Activated T-helper 2 cell treated with anti-CD3 and anti-CD28 coated beads, Interferon-gamma antibody, Interleukin-2, Interleukin-4, amounts not matched to agents 10 μg/mL and 5 μg/mL and 100 μg/mL, durations not matched to agents 14 hours and 24 hours and 36 hours (primary cell): ENCODE measurements at regions of chr11 and their contacts with region 1.

Region 1: GRCh38 chr11:32435511-32435941 is at the start of gene WT1:
- DNase-seq: no peak
- H3K4me3 Mint-ChIP-seq: no peak within 1 kb of the TSS
- H3K27ac Mint-ChIP-seq: no peak within 1 kb of the TSS
- H3K4me1 Mint-ChIP-seq: peaks cover 14% of the 10 kb centered on the region
- H3K27me3 Mint-ChIP-seq: peaks cover 81% of the 10 kb centered on the region
- total RNA-seq, gene WT1: not detected in 2 replicates

Region 2: DNA sequence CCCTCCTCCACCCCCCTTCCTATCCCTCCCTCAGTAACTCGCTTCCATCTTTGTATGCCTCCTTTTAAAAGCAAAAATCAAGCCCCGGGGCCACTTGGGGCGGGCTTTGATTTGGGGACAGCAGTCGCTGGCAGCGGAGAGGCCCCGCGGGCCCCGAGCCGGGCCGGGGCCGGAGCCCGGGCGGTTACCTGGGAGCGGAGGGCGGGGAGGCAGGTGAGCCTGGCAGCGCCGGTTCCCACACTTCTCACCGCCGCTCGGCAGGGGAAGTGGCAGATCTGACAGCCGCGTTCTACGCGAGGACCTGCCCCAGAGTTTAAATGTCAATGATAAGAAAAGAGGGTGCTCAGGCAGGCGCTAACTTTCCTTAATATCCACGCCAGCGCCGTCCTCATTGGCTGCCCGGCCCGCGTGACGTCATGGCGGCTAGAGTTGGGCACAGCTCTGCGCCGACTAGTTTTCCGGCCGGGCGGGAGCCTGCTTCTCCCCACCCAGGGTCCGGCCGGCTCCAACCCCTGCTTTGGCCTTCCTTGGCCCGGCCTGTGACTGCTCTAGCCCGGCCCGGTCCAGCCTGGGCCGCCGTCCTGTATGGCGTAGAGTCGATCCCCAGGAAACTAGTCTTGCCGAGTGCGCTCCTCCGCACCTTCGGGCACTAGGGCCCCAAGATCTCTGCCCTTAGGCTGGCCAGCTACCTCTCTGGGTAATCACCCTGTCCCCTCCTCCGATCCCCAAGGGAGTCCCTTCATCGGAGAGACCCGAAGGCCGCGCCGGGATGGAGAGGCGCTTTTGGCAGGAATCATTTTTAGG is 617.7 kb before region 1 on chr11:
- intact Hi-C with region 1: loop called (anchors 2 kb)
- DNase-seq: no peak
- H3K4me3 Mint-ChIP-seq: no peak overlapping the region
- H3K27ac Mint-ChIP-seq: no peak overlapping the region
- H3K4me1 Mint-ChIP-seq: no peaks in the 10 kb centered on the region
- H3K27me3 Mint-ChIP-seq: peaks cover 73% of the 10 kb centered on the region

Region 3: DNA sequence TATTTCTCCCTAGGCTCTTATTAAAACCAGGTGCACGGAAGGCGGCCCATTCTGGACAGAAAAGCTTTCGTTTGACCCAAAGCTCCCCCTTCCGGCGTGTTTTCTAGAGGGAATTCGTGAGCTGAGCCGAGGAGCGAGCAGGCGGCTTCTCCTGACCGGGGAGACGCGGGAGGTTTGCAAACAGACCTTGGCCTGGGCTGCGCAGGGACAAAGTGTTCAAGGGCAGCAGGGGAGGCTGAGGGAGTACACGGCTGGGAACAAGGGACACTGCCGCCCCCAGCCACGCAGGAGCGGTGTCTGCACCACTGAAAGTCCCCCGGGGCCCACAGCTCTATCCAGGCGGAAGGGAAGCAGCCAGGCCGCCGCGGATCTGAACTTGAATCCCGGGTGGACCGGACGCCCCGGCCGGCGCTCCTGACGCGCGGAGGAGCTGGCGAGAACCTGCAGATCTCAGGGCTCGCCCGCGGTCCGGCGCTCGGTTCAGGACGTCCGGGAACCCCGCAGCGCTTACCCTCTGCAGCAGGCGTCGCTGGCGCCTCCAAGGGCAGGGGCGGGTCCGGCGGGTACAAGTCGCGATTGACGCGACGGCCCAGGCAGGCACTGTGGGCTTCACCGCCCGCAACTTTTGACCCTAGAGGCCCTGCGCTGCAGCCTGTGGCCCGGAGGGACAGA is 102.1 kb before region 1 on chr11:
- intact Hi-C with region 1: loop called (anchors 5 kb)
- DNase-seq: no peak
- H3K4me3 Mint-ChIP-seq: peak overlapping the region; percentile 45
- H3K27ac Mint-ChIP-seq: no peak overlapping the region
- H3K4me1 Mint-ChIP-seq: peaks cover 4% of the 10 kb centered on the region
- H3K27me3 Mint-ChIP-seq: peaks cover 43% of the 10 kb centered on the region

Region 4: GRCh38 chr11:32792948-32793475 is 357.5 kb after region 1 on chr11:
- intact Hi-C with region 1: loop called (anchors 5 kb)
- DNase-seq: peak; percentile 49
- H3K4me3 Mint-ChIP-seq: peak overlapping the region; percentile 13
- H3K27ac Mint-ChIP-seq: no peak overlapping the region
- H3K4me1 Mint-ChIP-seq: peaks cover 3% of the 10 kb centered on the region
- H3K27me3 Mint-ChIP-seq: peaks cover 27% of the 10 kb centered on the region